ENCODE measurements at regions of chr9 and their contacts with region 1.

Region 1: DNA sequence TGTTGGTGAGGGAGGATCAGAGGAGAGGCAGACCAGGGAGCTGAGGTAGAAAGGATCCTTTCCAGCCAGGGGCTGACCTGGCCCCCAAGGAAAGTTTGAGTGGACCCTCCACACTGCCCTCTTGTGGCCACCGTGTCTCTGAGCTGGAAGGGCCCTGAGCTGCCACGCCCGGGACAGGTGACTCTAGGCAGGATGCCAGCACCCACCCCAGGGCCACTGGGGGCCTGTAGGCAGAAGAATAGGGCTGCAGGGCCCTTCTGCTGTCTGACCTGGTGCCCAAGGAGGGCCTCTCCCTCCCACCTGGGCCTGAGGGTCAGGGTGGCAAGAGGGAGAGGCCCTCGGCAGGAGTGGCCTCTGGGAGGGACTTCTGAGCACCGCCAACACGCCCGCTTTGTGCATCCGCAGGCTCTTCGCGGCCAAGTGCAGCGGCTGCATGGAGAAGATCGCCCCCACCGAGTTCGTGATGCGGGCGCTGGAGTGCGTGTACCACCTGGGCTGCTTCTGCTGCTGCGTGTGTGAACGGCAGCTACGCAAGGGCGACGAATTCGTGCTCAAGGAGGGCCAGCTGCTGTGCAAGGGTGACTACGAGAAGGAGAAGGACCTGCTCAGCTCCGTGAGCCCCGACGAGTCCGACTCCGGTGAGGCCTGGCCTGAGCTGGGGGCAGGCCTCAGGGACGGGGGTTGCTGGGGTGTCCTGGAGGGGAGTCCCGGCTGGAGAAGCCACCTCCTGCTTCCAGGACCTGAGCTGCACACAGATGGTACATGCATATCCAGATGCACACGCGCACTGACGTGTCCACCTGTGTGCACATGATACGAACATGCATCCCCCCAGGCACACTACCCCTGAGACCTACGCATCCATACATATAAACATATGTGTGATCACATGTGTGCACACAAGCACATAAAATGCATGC is 77.0 kb downstream of the LMX1B start:
- DNase-seq: peak in 1 of 2 experiments; percentile 95
- H3K4me3 ChIP-seq: no peak overlapping the region
- H3K27ac ChIP-seq: no peak overlapping the region
- H3K4me1 ChIP-seq: peaks cover 0 to 13% (median 3%) of the 10 kb centered on the region in 4 experiments; a peak in 5 of 7 replicates
- H3K27me3 ChIP-seq: peaks cover 0 to 7% (median 2%) of the 10 kb centered on the region in 4 experiments; a peak in 2 of 7 replicates
- CTCF ChIP-seq: peak in 2 of 3 experiments; percentile 88 to 91; a peak in 3 of 4 replicates
- EP300 ChIP-seq: no peak
- POLR2A ChIP-seq: no peak
- RAD21 ChIP-seq: peak; percentile 71 to 83

Region 2: DNA sequence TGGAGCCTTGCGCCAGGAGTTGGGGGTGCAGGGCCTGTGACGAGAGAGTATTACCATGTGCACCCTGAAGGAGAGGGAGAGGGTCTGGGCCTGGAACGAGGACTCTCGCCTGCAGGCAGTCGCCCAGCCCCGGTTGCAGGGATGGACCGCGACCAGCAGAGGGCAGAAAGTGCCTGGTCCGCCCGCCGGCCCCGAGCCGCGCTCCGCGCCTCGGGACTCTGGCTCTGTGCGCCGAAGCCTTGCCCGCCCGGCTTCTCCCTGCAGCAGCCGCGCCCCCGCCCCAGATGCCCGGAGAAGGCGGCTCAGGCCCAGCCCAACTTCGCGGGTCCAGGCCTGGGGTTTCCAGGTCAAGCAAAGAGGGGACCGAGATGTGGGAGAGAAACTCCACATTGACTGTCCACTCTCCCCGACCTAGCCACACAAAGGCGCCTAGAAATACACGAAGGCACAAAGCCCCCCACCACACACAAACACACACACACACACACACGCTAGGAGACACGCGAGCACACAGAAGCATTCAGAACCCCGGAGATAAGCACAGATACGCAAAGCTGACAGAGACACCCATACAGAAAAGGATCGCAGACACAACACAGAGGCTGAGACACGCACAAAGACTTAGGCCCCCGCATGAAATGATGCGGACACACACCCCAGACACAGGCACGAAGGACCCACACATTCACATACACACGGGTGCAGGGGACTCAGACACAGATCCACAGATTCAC is 78.9 kb before region 1 on chr9:
- CTCF ChIA-PET with region 1: interaction called, 35 read pairs
- POLR2A ChIA-PET with region 1: no interaction called
- DNase-seq: peak; percentile 70 to 95
- H3K4me3 ChIP-seq: peak overlapping the region; percentile 30 to 63 (median 34); a peak in 6 of 8 replicates
- H3K27ac ChIP-seq: no peak overlapping the region
- H3K4me1 ChIP-seq: peaks cover 12 to 54% (median 34%) of the 10 kb centered on the region in 4 experiments
- H3K27me3 ChIP-seq: peaks cover 80 to 92% (median 85%) of the 10 kb centered on the region in 4 experiments; a peak in 6 of 7 replicates
- CTCF ChIP-seq: peak in 2 of 3 experiments; percentile 87; a peak in 3 of 4 replicates
- EP300 ChIP-seq: no peak; a peak in 1 of 3 replicates
- POLR2A ChIP-seq: no peak
- RAD21 ChIP-seq: peak; percentile 72 to 82

Region 3: GRCh38 chr9:126626127-126626925 is 64.4 kb before region 1 on chr9:
- CTCF ChIA-PET with region 1: interaction called, 323 read pairs
- POLR2A ChIA-PET with region 1: interaction called, 4 read pairs
- DNase-seq: peak in 1 of 2 experiments; percentile 75
- H3K4me3 ChIP-seq: peak overlapping the region; percentile 2 to 56 (median 36); a peak in 6 of 8 replicates
- H3K27ac ChIP-seq: no peak overlapping the region
- H3K4me1 ChIP-seq: peaks cover 0 to 43% (median 33%) of the 10 kb centered on the region in 4 experiments; a peak in 6 of 7 replicates
- H3K27me3 ChIP-seq: peaks cover 80 to 100% (median 95%) of the 10 kb centered on the region in 4 experiments
- CTCF ChIP-seq: no peak
- EP300 ChIP-seq: no peak
- POLR2A ChIP-seq: no peak
- RAD21 ChIP-seq: no peak

Region 4: GRCh38 chr9:126661521-126662220 is 29.0 kb before region 1 on chr9:
- CTCF ChIA-PET with region 1: interaction called, 67 read pairs
- POLR2A ChIA-PET with region 1: interaction called, 5 read pairs
- DNase-seq: peak; percentile 84 to 90
- H3K4me3 ChIP-seq: no peak overlapping the region; a peak in 1 of 8 replicates
- H3K27ac ChIP-seq: no peak overlapping the region
- H3K4me1 ChIP-seq: peaks cover 11 to 41% (median 30%) of the 10 kb centered on the region in 4 experiments
- H3K27me3 ChIP-seq: peaks cover 0 to 6% (median 2%) of the 10 kb centered on the region in 4 experiments; a peak in 3 of 7 replicates
- CTCF ChIP-seq: peak in 2 of 3 experiments; percentile 62 to 81; a peak in 3 of 4 replicates
- EP300 ChIP-seq: no peak
- POLR2A ChIP-seq: no peak
- RAD21 ChIP-seq: peak; percentile 62 to 75

Region 5: GRCh38 chr9:126781186-126782052 is 90.7 kb after region 1 on chr9:
- CTCF ChIA-PET with region 1: interaction called, 18 read pairs
- POLR2A ChIA-PET with region 1: no interaction called
- DNase-seq: peak; percentile 68 to 100
- H3K4me3 ChIP-seq: no peak overlapping the region
- H3K27ac ChIP-seq: no peak overlapping the region
- H3K4me1 ChIP-seq: peaks cover 0 to 2% (median under 1%) of the 10 kb centered on the region in 4 experiments; a peak in 1 of 7 replicates
- H3K27me3 ChIP-seq: peaks cover 0 to 5% (median 2%) of the 10 kb centered on the region in 4 experiments; a peak in 4 of 7 replicates
- CTCF ChIP-seq: peak; percentile 90 to 97 (median 91)
- EP300 ChIP-seq: no peak
- POLR2A ChIP-seq: no peak
- RAD21 ChIP-seq: peak; percentile 97 to 98

Measured in H1 (cell line).